Thyroid gland (tissue), 4 donors: ENCODE measurements at regions of chr13 and their contacts with region 1.

Region 1: DNA sequence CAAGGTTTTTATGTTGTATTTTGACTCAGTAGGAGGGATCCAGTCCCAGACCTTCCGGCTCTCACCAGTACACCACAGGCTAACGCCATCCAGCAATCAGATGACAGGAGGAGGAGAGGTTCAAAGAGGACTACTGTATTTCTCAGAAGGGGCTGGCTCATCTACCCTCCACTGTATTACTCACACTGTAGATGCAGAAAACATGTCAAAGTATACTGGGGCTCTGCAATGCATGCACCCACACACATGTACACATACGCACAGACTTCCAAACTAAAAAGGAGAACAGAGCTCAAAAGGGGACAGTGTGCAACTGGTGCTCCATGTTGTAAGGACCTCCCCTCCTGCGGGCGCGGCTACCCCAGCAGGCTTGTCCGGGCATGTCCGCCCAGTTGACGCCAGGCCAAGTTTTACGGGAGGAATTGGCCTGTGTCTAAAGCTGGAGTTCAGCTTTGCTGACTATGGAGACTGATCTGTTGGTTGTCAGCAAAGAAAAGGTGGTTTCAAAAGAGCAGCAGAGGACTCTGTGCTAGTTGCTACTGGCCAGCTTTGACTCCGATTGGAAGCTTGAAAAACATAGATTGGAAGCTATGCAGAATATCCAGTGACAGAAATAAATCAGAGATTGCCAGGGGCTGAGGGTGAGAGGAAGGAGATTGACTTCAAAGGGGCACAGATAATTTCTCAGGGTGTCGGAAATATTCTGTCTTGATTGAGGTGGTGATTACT is 314.2 kb downstream of the DLEU7 start:
- DNase-seq: peak; percentile 95 to 98
- H3K4me3 ChIP-seq: no peak overlapping the region
- H3K27ac ChIP-seq: peak overlapping the region; percentile 56 to 83 (median 71)
- H3K4me1 ChIP-seq: peaks cover 26 to 36% of the 10 kb centered on the region in 2 donors
- H3K27me3 ChIP-seq: no peaks in the 10 kb centered on the region
- CTCF ChIP-seq: no peak
- POLR2A ChIP-seq: peak in 1 of 2 donors; percentile 55

Region 2: GRCh38 chr13:49985129-49985528 is 544.2 kb before region 1 on chr13:
- intact Hi-C with region 1: loop called (anchors 10 kb)
- DNase-seq: no peak
- H3K4me3 ChIP-seq: no peak overlapping the region
- H3K27ac ChIP-seq: no peak overlapping the region
- H3K4me1 ChIP-seq: no peaks in the 10 kb centered on the region
- H3K27me3 ChIP-seq: no peaks in the 10 kb centered on the region
- CTCF ChIP-seq: no peak
- POLR2A ChIP-seq: no peak

Region 3: DNA sequence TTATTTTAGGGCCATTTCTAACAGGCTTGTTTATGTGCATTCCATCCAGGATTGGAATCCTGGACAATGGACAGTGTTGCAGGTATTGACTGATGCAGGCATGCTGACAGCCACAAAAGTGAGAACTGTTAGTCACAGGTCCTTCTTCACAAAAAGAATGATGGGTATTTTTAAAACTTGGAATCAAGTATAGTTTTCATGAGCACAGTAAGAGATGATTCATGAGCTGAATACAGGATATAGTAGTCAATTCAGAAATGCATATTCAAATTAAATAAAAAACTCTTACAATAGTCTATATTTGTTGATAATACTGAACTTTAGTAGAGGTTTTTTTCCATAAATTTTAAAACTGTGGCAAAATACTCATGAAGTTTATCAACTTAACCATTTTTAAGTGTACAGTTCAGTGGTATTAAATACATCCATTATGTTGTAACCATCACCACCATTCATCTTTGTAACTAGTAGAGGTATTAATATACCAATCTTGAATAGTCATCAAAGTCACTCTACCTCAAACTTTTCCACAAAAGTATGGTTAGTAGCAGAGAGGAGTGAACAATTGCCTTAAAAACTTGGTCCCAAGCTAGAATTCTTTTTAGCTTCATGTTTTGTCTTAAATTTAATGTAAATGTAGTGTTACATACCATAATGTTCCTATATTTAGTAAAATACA is 434.6 kb before region 1 on chr13:
- intact Hi-C with region 1: loop called (anchors 10 kb)
- DNase-seq: no peak
- H3K4me3 ChIP-seq: no peak overlapping the region
- H3K27ac ChIP-seq: no peak overlapping the region
- H3K4me1 ChIP-seq: no peaks in the 10 kb centered on the region
- H3K27me3 ChIP-seq: no peaks in the 10 kb centered on the region
- CTCF ChIP-seq: no peak
- POLR2A ChIP-seq: no peak

Region 4: GRCh38 chr13:50123862-50124536 is 405.3 kb before region 1 on chr13:
- intact Hi-C with region 1: loop called (anchors 10 kb)
- DNase-seq: peak; percentile 74 to 96
- H3K4me3 ChIP-seq: peak overlapping the region; percentile 55 to 99 (median 62)
- H3K27ac ChIP-seq: peak overlapping the region; percentile 92 to 100 (median 96)
- H3K4me1 ChIP-seq: peaks cover 9 to 24% of the 10 kb centered on the region in 2 donors
- H3K27me3 ChIP-seq: peaks cover 8% of the 10 kb centered on the region
- CTCF ChIP-seq: peak in 2 of 6 experiments; percentile 2 to 6
- POLR2A ChIP-seq: peak; percentile 48 to 93

Region 5: DNA sequence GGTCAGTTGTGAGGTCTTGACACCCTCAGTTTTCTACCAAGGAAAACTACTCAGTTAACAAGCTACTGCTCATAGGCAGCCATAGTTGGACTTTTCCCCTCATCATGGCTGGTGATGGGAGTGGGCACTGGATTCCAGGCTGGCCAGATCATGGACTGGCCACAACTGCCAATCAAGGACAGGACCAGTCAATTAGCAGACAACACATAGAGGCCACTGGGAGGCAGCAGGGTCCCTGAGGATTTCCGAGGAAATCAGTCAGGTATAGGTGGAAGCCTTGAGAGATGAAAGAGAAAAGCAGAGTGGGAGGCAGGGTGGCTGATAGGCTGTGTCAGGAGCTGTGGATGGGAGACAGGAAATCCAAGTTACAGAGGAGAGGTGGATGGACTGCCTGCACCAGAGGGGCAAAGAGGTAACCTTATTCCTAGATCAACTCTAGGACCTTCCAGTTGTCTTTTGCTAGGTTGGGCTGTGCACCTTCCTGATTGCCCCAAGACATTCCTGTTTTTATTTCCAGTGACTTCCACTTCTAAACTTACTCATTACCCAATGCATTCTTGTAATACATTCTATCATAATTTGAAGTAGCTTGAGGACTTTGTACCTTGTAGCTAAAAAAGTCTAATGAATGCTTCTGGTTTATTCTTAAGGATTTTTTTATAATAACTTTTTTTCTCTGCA is 152.3 kb before region 1 on chr13:
- intact Hi-C with region 1: no loop called
- DNase-seq: peak; percentile 24 to 37
- H3K4me3 ChIP-seq: no peak overlapping the region
- H3K27ac ChIP-seq: no peak overlapping the region
- H3K4me1 ChIP-seq: no peaks in the 10 kb centered on the region
- H3K27me3 ChIP-seq: no peaks in the 10 kb centered on the region
- CTCF ChIP-seq: peak in 2 of 6 experiments; percentile 20 to 35
- POLR2A ChIP-seq: no peak

Region 6: GRCh38 chr13:50401049-50401505 is 128.2 kb before region 1 on chr13:
- intact Hi-C with region 1: loop called (anchors 10 kb)
- DNase-seq: no peak
- H3K4me3 ChIP-seq: no peak overlapping the region
- H3K27ac ChIP-seq: no peak overlapping the region
- H3K4me1 ChIP-seq: peaks cover 36 to 40% of the 10 kb centered on the region in 2 donors
- H3K27me3 ChIP-seq: no peaks in the 10 kb centered on the region
- CTCF ChIP-seq: no peak
- POLR2A ChIP-seq: no peak

Region 7: GRCh38 chr13:50645092-50645491 is 115.8 kb after region 1 on chr13:
- intact Hi-C with region 1: no loop called
- DNase-seq: no peak
- H3K4me3 ChIP-seq: no peak overlapping the region
- H3K27ac ChIP-seq: no peak overlapping the region
- H3K4me1 ChIP-seq: no peaks in the 10 kb centered on the region
- H3K27me3 ChIP-seq: no peaks in the 10 kb centered on the region
- CTCF ChIP-seq: no peak
- POLR2A ChIP-seq: no peak

Region 8: GRCh38 chr13:50731400-50731799 is 202.1 kb after region 1 on chr13:
- intact Hi-C with region 1: no loop called
- DNase-seq: peak in 1 of 2 donors; percentile 17
- H3K4me3 ChIP-seq: no peak overlapping the region
- H3K27ac ChIP-seq: no peak overlapping the region
- H3K4me1 ChIP-seq: no peaks in the 10 kb centered on the region
- H3K27me3 ChIP-seq: no peaks in the 10 kb centered on the region
- CTCF ChIP-seq: no peak
- POLR2A ChIP-seq: no peak

Region 9: DNA sequence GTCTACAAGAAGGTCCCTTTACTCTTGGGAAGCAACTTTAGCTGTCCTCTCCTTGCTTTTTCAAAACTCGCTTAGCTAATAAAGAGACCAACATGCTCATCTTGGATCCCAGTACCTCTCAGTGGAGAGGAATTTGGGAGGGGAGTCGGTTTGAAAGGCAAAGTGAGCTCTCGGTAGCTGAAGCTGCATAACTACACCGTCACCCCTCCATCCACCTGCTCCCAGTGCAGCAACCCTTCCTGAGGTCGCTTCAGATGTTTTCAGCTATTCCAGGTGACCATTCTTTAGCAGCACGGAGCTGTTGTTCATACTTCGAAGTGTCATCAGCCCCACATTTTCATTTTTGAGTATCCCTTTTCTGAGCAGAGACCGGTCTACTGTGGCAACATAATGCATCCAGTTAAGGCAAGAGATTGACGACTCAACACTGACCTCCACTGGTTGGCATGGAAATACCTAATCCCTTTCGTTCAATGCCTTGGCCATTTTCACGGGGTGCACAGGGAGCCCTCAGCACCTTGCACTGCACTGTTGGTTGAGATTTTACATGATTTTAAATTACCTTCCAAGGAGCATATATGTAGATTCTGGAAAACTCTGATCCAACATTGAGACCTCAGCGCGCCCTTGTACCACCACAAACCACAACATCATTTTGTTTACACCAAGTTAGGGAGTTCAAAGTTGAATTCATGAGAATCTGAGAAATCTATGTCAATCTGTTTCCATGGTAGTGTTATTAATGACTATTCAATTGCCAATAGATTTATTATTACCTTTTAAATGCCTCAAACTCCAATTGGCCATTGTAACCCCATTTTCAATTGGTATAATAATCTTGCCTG is 272.0 kb after region 1 on chr13:
- intact Hi-C with region 1: loop called (anchors 5 kb)
- DNase-seq: peak; percentile 52 to 56
- H3K4me3 ChIP-seq: no peak overlapping the region
- H3K27ac ChIP-seq: no peak overlapping the region
- H3K4me1 ChIP-seq: no peaks in the 10 kb centered on the region
- H3K27me3 ChIP-seq: no peaks in the 10 kb centered on the region
- CTCF ChIP-seq: peak; percentile 37 to 85 (median 76)
- POLR2A ChIP-seq: no peak